ENCODE measurements at regions of chr6 and their contacts with region 1.

Region 1: DNA sequence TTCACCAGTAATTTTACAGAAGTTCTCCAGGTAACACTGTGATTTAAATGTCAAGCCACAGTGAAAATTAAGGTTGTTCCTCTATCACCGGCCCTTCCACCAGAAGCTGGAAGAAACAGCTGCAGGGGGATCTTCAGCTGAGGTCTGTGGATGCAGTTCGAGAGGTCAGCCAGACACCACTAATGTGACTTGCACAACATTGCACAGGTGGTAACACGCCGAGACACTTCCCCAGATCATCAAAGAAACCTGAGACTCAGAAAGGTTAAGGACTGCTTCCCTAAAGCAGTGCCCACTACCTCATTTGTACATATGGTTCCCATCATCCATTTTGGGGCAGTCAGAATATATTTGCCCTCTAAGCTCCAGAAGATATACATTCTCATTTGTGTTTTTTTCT is 8.1 kb upstream of the SERPINB9 start:
- DNase-seq: no peak
- H3K4me3 ChIP-seq: no peak overlapping the region
- H3K27ac ChIP-seq: no peak overlapping the region
- H3K4me1 ChIP-seq: no peaks in the 10 kb centered on the region
- H3K27me3 ChIP-seq: no peaks in the 10 kb centered on the region
- CTCF ChIP-seq: no peak

Region 2: DNA sequence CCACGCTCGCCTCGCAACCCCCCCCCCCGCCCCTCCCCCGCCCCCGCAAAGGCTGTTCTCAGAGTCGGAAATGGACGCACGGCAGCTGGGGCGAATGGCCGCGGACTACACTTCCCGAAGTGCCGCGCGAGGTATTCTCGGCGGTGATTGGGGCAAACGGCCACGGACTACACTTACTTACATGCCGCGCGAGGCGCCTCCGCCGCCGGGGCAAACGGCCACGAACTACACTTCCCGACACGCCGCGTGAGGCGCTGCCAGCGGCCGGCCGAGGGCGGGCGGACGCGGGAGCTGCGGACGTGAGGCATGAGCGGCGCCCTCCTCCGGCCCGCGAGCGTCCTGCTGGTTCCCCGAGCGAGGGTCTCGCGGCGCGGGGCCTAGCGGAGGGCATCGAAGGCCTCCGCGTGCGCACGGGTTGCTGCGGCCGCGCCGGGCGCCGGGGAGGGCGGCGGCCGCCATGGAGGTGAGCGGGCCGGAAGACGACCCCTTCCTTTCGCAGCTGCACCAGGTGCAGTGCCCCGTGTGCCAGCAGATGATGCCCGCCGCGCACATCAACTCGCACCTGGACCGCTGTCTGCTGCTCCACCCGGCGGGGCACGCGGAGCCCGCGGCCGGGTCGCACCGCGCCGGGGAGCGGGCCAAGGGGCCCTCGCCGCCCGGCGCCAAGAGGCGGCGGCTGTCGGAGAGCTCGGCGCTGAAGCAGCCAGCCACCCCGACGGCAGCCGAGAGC is 145.8 kb before region 1 on chr6 and contains the start of gene WRNIP1:
- CTCF ChIA-PET with region 1: no interaction called
- POLR2A ChIA-PET with region 1: no interaction called
- intact Hi-C with region 1: no loop called
- DNase-seq: peak; percentile 99
- H3K4me3 ChIP-seq: peak within 1 kb of the TSS; percentile 89
- H3K27ac ChIP-seq: peak within 1 kb of the TSS; percentile 91
- H3K4me1 ChIP-seq: peaks cover 33% of the 10 kb centered on the region
- H3K27me3 ChIP-seq: no peaks in the 10 kb centered on the region
- CTCF ChIP-seq: peak; percentile 50
- total RNA-seq, gene WRNIP1: 48.9 and 49.3 TPM in 2 replicates

Region 3: DNA sequence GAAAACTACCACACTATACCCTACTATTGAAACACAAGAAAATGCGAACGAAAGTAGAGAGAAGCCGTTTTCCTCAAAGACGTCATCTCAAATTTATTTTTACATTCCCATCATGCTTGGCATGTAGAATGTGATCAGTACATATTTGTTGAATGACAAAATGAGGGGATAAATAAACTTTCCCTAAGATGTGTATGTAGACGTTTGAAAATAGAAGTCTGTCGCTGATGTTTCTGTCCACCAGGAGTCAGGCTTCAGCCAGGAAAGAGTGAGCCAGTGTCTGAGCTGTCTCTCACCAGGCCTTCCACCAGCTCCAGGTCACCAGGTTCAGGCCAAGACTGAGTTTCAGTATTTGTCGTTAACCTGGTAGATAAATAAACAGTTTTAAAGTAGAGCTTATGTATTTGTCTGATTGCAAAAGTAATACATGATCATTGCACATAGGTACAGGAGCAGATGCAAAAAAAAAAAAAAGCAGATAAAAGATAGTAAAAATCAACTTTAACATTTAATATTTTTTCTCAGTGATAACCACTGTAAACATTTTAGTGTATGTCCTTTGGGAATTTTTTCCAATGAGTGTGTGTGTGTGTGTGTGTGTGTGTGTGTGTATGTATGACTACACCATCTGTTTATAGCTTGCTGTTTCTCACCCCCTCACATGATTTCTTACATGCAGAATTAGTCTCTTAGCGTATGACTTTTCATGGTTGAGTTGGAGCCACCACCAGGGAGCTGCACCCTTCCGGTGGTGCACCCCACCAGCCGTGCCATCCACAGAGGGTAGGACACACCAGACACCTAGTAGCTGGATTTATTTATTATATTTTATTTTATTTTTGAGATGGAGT is 119.8 kb before region 1 on chr6:
- CTCF ChIA-PET with region 1: interaction called, 4 read pairs
- POLR2A ChIA-PET with region 1: no interaction called
- intact Hi-C with region 1: loop called (anchors 5 kb)
- DNase-seq: peak; percentile 78
- H3K4me3 ChIP-seq: no peak overlapping the region
- H3K27ac ChIP-seq: no peak overlapping the region
- H3K4me1 ChIP-seq: peaks cover 17% of the 10 kb centered on the region
- H3K27me3 ChIP-seq: no peaks in the 10 kb centered on the region
- CTCF ChIP-seq: peak; percentile 87

Region 4: DNA sequence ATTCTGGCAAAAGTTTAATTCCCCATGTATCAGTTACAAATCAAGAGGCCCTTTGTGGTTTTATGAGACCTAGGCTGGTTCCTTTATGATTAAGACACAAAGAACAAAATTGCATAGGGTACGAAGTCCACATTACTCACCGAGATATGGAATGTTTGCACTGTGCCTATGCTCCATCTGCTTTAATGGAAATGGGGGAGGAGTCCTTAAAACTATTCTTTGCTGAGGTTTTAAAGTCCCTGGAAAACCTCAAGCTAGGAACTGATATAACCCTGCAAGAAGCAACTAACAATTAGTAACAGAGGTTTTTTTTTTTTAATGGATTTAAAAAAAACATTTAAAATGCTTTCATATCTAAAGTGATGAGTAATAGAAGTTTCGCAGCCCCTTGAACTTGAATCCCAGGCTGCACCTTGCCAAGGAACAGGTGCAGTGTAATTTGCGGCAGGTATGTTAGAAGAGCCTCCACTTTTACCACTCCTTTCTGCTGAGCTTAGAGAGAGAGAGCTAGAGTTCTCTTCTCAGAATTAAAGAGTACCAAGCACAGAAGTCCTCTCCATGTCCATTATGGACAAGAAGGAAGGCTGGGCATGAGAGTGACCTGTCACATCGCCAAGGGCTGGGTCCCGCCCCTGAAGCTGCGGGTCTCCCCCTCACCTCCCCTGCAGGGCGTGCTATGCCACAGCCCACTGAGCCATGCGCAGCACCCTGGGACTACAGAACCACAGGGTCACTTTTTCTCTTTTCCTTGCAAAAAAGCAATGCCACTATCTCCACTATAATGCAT is 71.8 kb before region 1 on chr6:
- CTCF ChIA-PET with region 1: no interaction called
- POLR2A ChIA-PET with region 1: no interaction called
- intact Hi-C with region 1: no loop called
- DNase-seq: peak; percentile 62
- H3K4me3 ChIP-seq: no peak overlapping the region
- H3K27ac ChIP-seq: no peak overlapping the region
- H3K4me1 ChIP-seq: peaks cover 29% of the 10 kb centered on the region
- H3K27me3 ChIP-seq: no peaks in the 10 kb centered on the region
- CTCF ChIP-seq: no peak

Measured in A673 (cell line).